SK-N-SH (cell line): ENCODE measurements at regions of chr14 and their contacts with region 1.

Region 1: GRCh38 chr14:67526676-67527459 is 6.2 kb upstream of the PLEKHH1 start:
- DNase-seq: peak; percentile 65
- H3K4me3 ChIP-seq: peak overlapping the region in 1 of 2 experiments; percentile 34; a peak in 1 of 4 replicates
- H3K27ac ChIP-seq: no peak overlapping the region
- H3K4me1 ChIP-seq: no peaks in the 10 kb centered on the region; a peak in 1 of 4 replicates
- H3K27me3 ChIP-seq: peaks cover 18% of the 10 kb centered on the region; the same call in 1 of the 2 replicates
- CTCF ChIP-seq: peak; percentile 86
- EP300 ChIP-seq: no peak
- RAD21 ChIP-seq: peak; percentile 72

Region 2: DNA sequence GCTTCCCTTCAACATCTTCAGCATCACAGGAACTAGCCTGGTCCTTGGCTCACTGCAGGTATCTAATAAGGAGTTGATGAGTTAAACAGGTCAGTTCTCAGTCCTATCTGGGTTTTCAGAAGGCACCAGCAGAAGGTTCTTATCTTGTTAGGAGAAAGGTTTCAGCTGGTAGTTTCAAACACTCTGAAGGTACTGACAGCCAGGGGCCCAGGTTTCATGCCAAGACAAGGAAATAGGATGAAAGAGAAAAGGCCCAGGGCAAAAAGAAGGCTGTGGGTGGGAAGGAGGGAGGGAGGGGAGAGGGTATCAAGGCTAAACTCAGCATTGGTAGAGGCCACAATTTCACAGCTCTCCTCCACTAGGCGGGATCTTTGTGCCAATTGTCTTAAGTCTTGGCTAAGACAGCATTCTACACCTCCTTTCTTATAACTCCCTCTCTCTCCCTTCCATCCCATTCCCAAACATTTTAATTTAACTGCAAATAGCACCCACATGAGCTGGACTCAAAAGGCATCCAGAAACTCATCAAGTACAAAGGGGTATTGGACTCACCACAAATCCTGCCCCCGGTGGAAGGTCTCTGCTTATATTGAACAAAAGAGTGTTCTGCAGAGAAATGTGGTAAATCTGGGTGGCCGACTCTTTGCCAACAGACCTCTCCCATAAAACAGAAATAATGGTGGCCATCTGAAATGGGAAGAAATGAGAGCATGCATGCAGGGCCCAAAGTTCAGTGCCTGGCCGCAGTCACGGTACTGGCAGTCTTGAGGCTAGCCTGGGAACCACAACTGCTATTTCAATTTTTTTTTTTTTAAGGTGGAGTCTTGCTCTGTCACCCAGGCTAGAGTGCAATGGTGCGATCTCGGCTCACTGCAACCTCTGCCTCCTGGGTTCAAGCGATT is 59.4 kb before region 1 on chr14:
- CTCF ChIA-PET with region 1: interaction called, 12 read pairs
- POLR2A ChIA-PET with region 1: no interaction called
- DNase-seq: no peak
- H3K4me3 ChIP-seq: no peak overlapping the region
- H3K27ac ChIP-seq: no peak overlapping the region
- H3K4me1 ChIP-seq: no peaks in the 10 kb centered on the region
- H3K27me3 ChIP-seq: no peaks in the 10 kb centered on the region; the same call in 1 of the 2 replicates
- CTCF ChIP-seq: peak; percentile 33; the same call in 1 of the 2 replicates
- EP300 ChIP-seq: no peak
- RAD21 ChIP-seq: no peak

Region 3: DNA sequence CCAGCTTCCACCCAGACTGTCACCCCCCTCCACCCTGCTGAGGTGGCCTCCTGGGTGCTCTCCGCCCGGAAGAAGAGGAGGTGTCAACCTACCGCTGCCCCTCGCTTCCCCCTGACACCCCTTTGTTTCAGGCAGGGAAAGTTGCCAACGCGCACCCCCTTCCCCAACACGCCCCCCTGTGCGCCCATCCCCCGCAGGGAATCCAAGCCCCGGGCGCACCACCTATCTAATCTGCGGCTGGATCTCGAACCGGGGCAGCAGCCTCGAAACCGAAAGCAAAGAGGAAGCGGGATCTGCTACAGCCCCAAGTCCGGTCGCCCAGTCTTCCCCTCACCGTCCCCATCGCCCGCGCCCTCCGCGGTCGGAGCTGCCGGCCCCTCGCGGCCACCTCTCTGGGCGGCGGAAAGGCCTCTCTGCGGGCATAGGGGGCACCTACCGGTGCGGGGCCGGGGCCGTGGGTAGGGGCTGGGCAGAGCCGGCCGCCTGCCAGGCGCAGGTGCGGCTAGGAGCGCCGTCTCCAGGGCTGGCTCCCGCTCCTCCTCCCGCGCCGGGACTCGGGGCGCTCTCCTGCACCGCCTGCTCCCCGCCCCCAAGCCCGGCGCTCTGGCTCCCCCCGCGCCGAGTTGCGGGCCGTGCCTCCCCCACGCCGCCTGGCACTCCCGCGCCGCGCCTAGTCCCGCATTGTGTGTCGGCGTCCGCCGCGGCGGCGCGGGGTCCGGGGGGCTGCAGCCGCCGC is 12.1 kb before region 1 on chr14:
- CTCF ChIA-PET with region 1: interaction called, 94 read pairs
- POLR2A ChIA-PET with region 1: interaction called, 3 read pairs
- DNase-seq: peak; percentile 83
- H3K4me3 ChIP-seq: peak overlapping the region; percentile 74 to 78
- H3K27ac ChIP-seq: no peak overlapping the region
- H3K4me1 ChIP-seq: peaks cover 0 to 18% of the 10 kb centered on the region in 2 experiments; a peak in 2 of 4 replicates
- H3K27me3 ChIP-seq: peaks cover 21% of the 10 kb centered on the region; the same call in 1 of the 2 replicates
- CTCF ChIP-seq: no peak
- EP300 ChIP-seq: no peak
- RAD21 ChIP-seq: no peak

Region 4: DNA sequence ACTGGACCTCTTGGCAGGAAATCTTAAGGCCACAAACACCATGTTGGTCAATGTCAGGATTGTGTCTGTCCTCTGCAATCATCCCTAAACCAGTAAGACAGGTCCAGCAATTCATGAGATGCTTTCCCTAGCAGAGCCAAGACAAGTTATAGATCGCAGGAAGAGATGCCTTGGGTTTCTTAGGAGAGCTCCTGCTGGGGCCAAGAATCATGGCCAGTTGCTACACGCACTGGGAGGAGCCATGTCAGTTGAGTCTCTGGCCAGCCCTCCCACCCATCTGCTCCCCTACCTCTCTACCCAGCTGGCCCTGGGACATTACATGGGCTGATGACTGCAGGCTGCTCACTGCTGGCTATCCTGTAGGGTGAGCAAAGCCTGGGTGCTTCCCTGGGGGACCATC is 20.4 kb after region 1 on chr14:
- CTCF ChIA-PET with region 1: interaction called, 22 read pairs
- POLR2A ChIA-PET with region 1: no interaction called
- DNase-seq: no peak
- H3K4me3 ChIP-seq: no peak overlapping the region
- H3K27ac ChIP-seq: no peak overlapping the region
- H3K4me1 ChIP-seq: no peaks in the 10 kb centered on the region
- H3K27me3 ChIP-seq: no peaks in the 10 kb centered on the region
- CTCF ChIP-seq: no peak
- EP300 ChIP-seq: no peak
- RAD21 ChIP-seq: no peak

Region 5: GRCh38 chr14:67666750-67667449 is 140.0 kb after region 1 on chr14:
- CTCF ChIA-PET with region 1: interaction called, 14 read pairs
- POLR2A ChIA-PET with region 1: no interaction called
- DNase-seq: peak; percentile 59
- H3K4me3 ChIP-seq: no peak overlapping the region; a peak in 1 of 4 replicates
- H3K27ac ChIP-seq: no peak overlapping the region
- H3K4me1 ChIP-seq: 0 out of 4 replicates have a peak, but pooled peaks cover 0 to 3% of the 10 kb centered on the region in 2 experiments
- H3K27me3 ChIP-seq: no peaks in the 10 kb centered on the region
- CTCF ChIP-seq: peak; percentile 78
- EP300 ChIP-seq: no peak
- RAD21 ChIP-seq: peak; percentile 82